ENCODE measurements at regions of chr22 and their contacts with region 1.

Region 1: GRCh38 chr22:46737976-46738646 is at the start of gene CERK:
- DNase-seq: peak; percentile 39 to 84 (median 70)
- ATAC-seq: peak; percentile 71
- H3K4me3 ChIP-seq: peak within 1 kb of the TSS; percentile 59 to 70
- H3K4me3 Mint-ChIP-seq: peak within 1 kb of the TSS; percentile 99
- H3K27ac ChIP-seq: peak within 1 kb of the TSS; percentile 59 to 81
- H3K27ac Mint-ChIP-seq: peak within 1 kb of the TSS; percentile 99
- H3K4me1 ChIP-seq: peaks cover 49% of the 10 kb centered on the region
- H3K4me1 Mint-ChIP-seq: peaks cover 44% of the 10 kb centered on the region
- H3K27me3 ChIP-seq: no peaks in the 10 kb centered on the region
- H3K27me3 Mint-ChIP-seq: no peaks in the 10 kb centered on the region
- CTCF ChIP-seq: no peak
- total RNA-seq, gene CERK: 93.5 to 95.0 TPM

Region 2: DNA sequence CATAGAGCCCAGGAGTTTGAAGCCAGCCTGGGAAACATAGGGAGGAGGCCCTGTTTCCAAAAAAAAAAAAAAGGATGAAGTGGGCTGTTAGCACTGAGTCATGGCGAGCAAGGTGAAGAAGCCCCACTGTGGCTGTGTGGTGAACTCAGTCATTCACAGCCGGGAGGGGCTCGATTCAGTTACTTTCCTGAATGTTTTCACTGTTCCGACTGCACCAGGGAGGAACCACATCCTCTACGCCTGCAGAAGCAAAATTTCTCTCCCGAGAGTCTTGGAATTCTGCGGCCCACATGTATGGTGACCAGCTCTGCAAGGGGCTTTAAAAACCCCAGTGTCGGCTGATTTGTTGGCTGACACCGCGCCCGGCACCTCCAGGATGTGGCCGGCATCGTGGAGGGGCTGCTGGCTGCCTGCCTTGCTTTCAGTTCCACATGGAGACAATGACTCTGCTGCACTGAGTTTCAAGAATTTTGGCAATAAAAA is 145.7 kb before region 1 on chr22:
- CTCF ChIA-PET with region 1: no interaction called
- POLR2A ChIA-PET with region 1: no interaction called
- intact Hi-C with region 1: loop called in 1 of 2 experiments (anchors 5 kb)
- DNase-seq: peak in 8 of 9 experiments; percentile 32 to 75 (median 54)
- ATAC-seq: peak; percentile 73
- H3K4me3 ChIP-seq: peak overlapping the region in 1 of 2 experiments; percentile 35
- H3K4me3 Mint-ChIP-seq: peak overlapping the region; percentile 76
- H3K27ac ChIP-seq: peak overlapping the region in 1 of 2 experiments; percentile 54
- H3K27ac Mint-ChIP-seq: peak overlapping the region; percentile 81
- H3K4me1 ChIP-seq: peaks cover 22% of the 10 kb centered on the region
- H3K4me1 Mint-ChIP-seq: peaks cover 22% of the 10 kb centered on the region
- H3K27me3 ChIP-seq: no peaks in the 10 kb centered on the region
- H3K27me3 Mint-ChIP-seq: no peaks in the 10 kb centered on the region
- CTCF ChIP-seq: no peak

Region 3: DNA sequence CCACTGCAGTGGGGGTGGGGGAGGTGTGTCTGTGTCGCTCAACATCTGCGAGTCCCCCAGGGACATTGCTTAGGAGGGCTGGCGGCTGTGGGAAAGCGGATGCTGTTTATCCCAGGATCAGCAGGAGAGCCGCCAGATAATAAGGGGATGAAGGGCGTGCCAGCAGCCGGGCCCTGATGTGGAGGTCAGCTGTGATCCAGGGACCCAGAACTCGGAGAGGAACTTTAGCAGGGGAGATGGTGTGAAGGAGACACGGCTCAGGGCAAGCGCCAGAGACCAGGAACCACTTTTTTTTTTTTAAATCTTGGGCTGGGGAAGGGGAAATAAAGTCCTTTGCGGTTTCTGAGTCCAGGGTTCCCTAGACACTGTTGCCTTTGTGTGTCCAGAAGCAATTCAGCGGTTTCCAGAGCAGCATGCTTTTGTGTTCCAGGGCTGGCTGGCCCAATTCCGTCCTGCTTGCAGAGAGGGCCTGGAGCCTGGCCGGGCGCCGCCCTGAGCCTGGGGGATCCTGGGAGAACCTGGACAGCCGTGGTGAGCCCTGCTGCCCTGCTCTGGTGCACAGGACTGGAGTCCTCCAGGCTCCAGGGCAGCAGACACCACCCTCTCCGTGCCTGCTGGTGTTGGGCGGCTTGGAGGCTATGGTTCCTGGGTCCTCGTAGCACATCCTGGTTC is 118.1 kb before region 1 on chr22 and contains the start of gene GRAMD4:
- CTCF ChIA-PET with region 1: no interaction called
- POLR2A ChIA-PET with region 1: no interaction called
- intact Hi-C with region 1: loop called in 1 of 2 experiments (anchors 10 kb)
- DNase-seq: peak in 1 of 9 experiments; percentile 14
- ATAC-seq: no peak
- H3K4me3 ChIP-seq: no peak within 1 kb of the TSS
- H3K4me3 Mint-ChIP-seq: no peak within 1 kb of the TSS
- H3K27ac ChIP-seq: no peak within 1 kb of the TSS
- H3K27ac Mint-ChIP-seq: no peak within 1 kb of the TSS
- H3K4me1 ChIP-seq: no peaks in the 10 kb centered on the region
- H3K4me1 Mint-ChIP-seq: no peaks in the 10 kb centered on the region
- H3K27me3 ChIP-seq: no peaks in the 10 kb centered on the region
- H3K27me3 Mint-ChIP-seq: no peaks in the 10 kb centered on the region
- CTCF ChIP-seq: no peak
- total RNA-seq, gene GRAMD4: 8.4 to 8.7 TPM

Region 4: GRCh38 chr22:46674367-46674781 is 63.7 kb before region 1 on chr22:
- CTCF ChIA-PET with region 1: no interaction called
- POLR2A ChIA-PET with region 1: interaction called, 5 read pairs
- intact Hi-C with region 1: loop called in 1 of 2 experiments (anchors 1 kb)
- DNase-seq: peak; percentile 54 to 95 (median 85)
- ATAC-seq: peak; percentile 87
- H3K4me3 ChIP-seq: peak overlapping the region; percentile 40 to 57
- H3K4me3 Mint-ChIP-seq: peak overlapping the region; percentile 93
- H3K27ac ChIP-seq: peak overlapping the region; percentile 44 to 70
- H3K27ac Mint-ChIP-seq: peak overlapping the region; percentile 96
- H3K4me1 ChIP-seq: peaks cover 32% of the 10 kb centered on the region
- H3K4me1 Mint-ChIP-seq: peaks cover 22% of the 10 kb centered on the region
- H3K27me3 ChIP-seq: no peaks in the 10 kb centered on the region
- H3K27me3 Mint-ChIP-seq: no peaks in the 10 kb centered on the region
- CTCF ChIP-seq: no peak

Region 5: GRCh38 chr22:46748908-46749675 is 11.0 kb after region 1 on chr22:
- CTCF ChIA-PET with region 1: interaction called, 13 read pairs
- POLR2A ChIA-PET with region 1: interaction called, 24 read pairs
- intact Hi-C with region 1: loop called (anchors 1 kb)
- DNase-seq: peak; percentile 57 to 88 (median 80)
- ATAC-seq: peak; percentile 95
- H3K4me3 ChIP-seq: peak overlapping the region; percentile 11 to 38
- H3K4me3 Mint-ChIP-seq: peak overlapping the region; percentile 78
- H3K27ac ChIP-seq: peak overlapping the region; percentile 55 to 82
- H3K27ac Mint-ChIP-seq: peak overlapping the region; percentile 97
- H3K4me1 ChIP-seq: peaks cover 26% of the 10 kb centered on the region
- H3K4me1 Mint-ChIP-seq: peaks cover 24% of the 10 kb centered on the region
- H3K27me3 ChIP-seq: no peaks in the 10 kb centered on the region
- H3K27me3 Mint-ChIP-seq: no peaks in the 10 kb centered on the region
- CTCF ChIP-seq: no peak

Region 6: DNA sequence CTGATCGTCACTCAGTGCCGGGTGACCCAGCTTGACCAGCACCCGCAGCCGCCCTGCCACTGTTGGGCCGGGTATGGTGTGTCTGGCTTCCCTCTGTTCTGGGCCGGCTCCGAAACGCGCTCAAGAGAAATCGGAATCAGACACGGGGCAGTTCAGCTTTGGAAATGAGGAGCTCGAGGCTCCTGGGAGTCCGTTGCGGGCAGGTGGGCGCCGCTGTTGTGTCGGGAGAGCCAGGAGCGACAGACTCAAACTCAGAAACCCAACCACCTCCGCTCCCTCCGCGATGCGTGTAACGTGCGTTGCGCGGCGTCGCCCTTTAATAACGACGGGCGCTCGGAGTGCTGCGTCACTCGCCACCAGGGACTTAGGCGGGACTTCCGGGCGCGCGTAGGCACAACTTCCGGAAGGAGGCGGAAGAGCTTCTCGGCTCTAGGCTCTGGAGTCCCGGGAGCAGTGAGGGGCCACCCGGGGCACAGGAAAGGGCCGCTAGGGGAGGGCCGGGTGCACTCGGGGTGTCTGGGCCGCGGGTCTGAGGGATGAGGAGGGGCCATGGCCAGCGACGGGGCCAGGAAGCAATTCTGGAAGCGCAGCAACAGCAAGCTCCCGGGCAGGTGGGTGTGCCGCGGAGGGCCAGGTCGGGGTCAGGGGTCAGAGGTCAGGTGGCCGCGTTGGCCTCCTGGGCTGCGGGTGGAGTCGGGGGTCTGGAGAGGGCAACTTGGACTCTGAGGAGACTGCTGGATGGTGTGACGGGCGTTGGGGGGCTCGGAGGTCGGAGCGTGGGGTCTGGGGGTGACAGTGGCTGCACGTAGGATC is 24.3 kb after region 1 on chr22 and contains the start of gene TBC1D22A:
- CTCF ChIA-PET with region 1: interaction called, 37 read pairs
- POLR2A ChIA-PET with region 1: interaction called, 24 read pairs
- intact Hi-C with region 1: loop called (anchors 1 kb)
- DNase-seq: peak; percentile 91 to 97 (median 95)
- ATAC-seq: peak; percentile 86
- H3K4me3 ChIP-seq: peak within 1 kb of the TSS; percentile 84 to 99
- H3K4me3 Mint-ChIP-seq: peak within 1 kb of the TSS; percentile 99
- H3K27ac ChIP-seq: peak within 1 kb of the TSS; percentile 95 to 99
- H3K27ac Mint-ChIP-seq: peak within 1 kb of the TSS; percentile 100
- H3K4me1 ChIP-seq: peaks cover 36% of the 10 kb centered on the region
- H3K4me1 Mint-ChIP-seq: peaks cover 64% of the 10 kb centered on the region
- H3K27me3 ChIP-seq: no peaks in the 10 kb centered on the region
- H3K27me3 Mint-ChIP-seq: no peaks in the 10 kb centered on the region
- CTCF ChIP-seq: no peak
- total RNA-seq, gene TBC1D22A: 21.8 to 27.4 TPM

Region 7: GRCh38 chr22:46791201-46791731 is 53.2 kb after region 1 on chr22:
- CTCF ChIA-PET with region 1: no interaction called
- POLR2A ChIA-PET with region 1: interaction called, 4 read pairs
- intact Hi-C with region 1: loop called (anchors 1 to 2 kb)
- DNase-seq: peak; percentile 69 to 96 (median 85)
- ATAC-seq: peak; percentile 90
- H3K4me3 ChIP-seq: peak overlapping the region; percentile 29 to 47
- H3K4me3 Mint-ChIP-seq: peak overlapping the region; percentile 76
- H3K27ac ChIP-seq: peak overlapping the region; percentile 95 to 99
- H3K27ac Mint-ChIP-seq: peak overlapping the region; percentile 100
- H3K4me1 ChIP-seq: peaks cover 36% of the 10 kb centered on the region
- H3K4me1 Mint-ChIP-seq: peaks cover 50% of the 10 kb centered on the region
- H3K27me3 ChIP-seq: no peaks in the 10 kb centered on the region
- H3K27me3 Mint-ChIP-seq: no peaks in the 10 kb centered on the region
- CTCF ChIP-seq: no peak